B cell (primary cell): ENCODE measurements at regions of chr3 and their contacts with region 1.

Region 1: GRCh38 chr3:56251343-56251945 is 216.8 kb downstream of the ERC2 start:
- DNase-seq: peak; percentile 30
- ATAC-seq: no peak
- H3K4me3 ChIP-seq: no peak overlapping the region
- H3K4me3 Mint-ChIP-seq: no peak overlapping the region
- H3K27ac ChIP-seq: no peak overlapping the region
- H3K27ac Mint-ChIP-seq: no peak overlapping the region
- H3K4me1 ChIP-seq: no peaks in the 10 kb centered on the region
- H3K4me1 Mint-ChIP-seq: no peaks in the 10 kb centered on the region
- H3K27me3 ChIP-seq: no peaks in the 10 kb centered on the region
- H3K27me3 Mint-ChIP-seq: peaks cover 6% of the 10 kb centered on the region
- CTCF ChIP-seq: peak; percentile 86

Region 2: DNA sequence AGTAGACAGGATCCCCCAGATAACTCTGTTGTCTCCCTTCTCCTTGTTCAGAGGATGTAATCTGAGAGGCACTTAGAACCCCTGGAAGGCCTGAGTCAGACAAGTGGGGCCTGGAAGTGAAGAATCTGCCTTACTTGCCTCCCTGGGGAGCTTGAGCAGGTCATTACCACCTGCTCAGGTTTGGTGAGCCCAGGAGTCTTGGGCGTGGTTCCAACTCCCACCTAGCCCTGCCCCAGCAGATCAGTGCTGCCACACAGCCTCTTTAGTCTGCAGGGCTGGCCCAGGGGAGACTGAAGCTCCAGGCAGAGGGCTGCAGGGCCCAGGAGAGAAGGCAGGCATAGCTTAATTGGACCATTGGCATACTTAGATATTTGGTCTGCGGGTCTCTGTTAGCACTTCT is 13.1 kb before region 1 on chr3:
- CTCF ChIA-PET with region 1: interaction called, 12 read pairs
- POLR2A ChIA-PET with region 1: no interaction called
- intact Hi-C with region 1: no loop called
- DNase-seq: no peak
- ATAC-seq: no peak
- H3K4me3 ChIP-seq: no peak overlapping the region
- H3K4me3 Mint-ChIP-seq: no peak overlapping the region
- H3K27ac ChIP-seq: no peak overlapping the region
- H3K27ac Mint-ChIP-seq: no peak overlapping the region
- H3K4me1 ChIP-seq: no peaks in the 10 kb centered on the region
- H3K4me1 Mint-ChIP-seq: no peaks in the 10 kb centered on the region
- H3K27me3 ChIP-seq: no peaks in the 10 kb centered on the region
- H3K27me3 Mint-ChIP-seq: peaks cover 7% of the 10 kb centered on the region
- CTCF ChIP-seq: no peak

Region 3: GRCh38 chr3:56573501-56573900 is 322.1 kb after region 1 on chr3:
- CTCF ChIA-PET with region 1: no interaction called
- POLR2A ChIA-PET with region 1: no interaction called
- intact Hi-C with region 1: no loop called
- DNase-seq: no peak
- ATAC-seq: no peak
- H3K4me3 ChIP-seq: no peak overlapping the region
- H3K4me3 Mint-ChIP-seq: no peak overlapping the region
- H3K27ac ChIP-seq: no peak overlapping the region
- H3K27ac Mint-ChIP-seq: no peak overlapping the region
- H3K4me1 ChIP-seq: no peaks in the 10 kb centered on the region
- H3K4me1 Mint-ChIP-seq: peaks cover 20% of the 10 kb centered on the region
- H3K27me3 ChIP-seq: no peaks in the 10 kb centered on the region
- H3K27me3 Mint-ChIP-seq: no peaks in the 10 kb centered on the region
- CTCF ChIP-seq: no peak